Panc1 (cell line): ENCODE measurements at regions of chr19 and their contacts with region 1.

Region 1: DNA sequence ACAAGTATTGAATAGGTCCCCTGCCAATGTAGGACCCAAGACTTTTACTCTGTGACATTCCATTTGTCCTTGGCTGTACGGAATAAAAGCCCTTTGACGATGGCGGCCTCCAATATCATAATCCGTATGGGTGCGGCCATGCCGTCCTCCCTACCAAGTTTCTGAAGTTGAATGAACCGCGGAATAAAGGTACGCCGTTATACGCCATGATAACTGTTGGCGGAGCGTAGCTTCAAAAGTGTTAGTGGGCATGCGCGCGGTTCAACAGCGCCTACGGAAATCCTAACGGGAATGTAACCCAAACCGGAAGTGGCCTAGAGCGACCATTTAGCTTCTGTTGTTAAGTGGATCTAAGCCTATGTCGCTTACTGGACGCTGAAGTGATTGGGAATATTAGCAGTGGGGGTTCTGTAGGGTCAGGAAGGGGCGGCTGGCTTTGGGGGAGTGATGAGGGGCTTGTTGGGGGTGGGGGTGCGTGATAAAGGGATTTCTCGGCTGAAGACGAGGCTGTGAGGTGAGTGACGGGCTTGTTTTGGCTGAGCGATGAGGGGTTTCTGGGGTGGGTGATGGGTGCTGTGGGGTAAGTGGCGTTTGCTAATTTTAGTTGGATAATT is at the start of gene ZNF175:
- DNase-seq: peak; percentile 91
- ATAC-seq: peak; percentile 99
- H3K4me3 ChIP-seq: peak within 1 kb of the TSS; percentile 71 to 86
- H3K27ac ChIP-seq: peak within 1 kb of the TSS; percentile 81
- H3K4me1 ChIP-seq: no peaks in the 10 kb centered on the region
- H3K27me3 ChIP-seq: peaks cover 7% of the 10 kb centered on the region
- CTCF ChIP-seq: no peak
- total RNA-seq, gene ZNF175: 7.3 TPM

Region 2: GRCh38 chr19:51292971-51293370 is 278.1 kb before region 1 on chr19:
- CTCF ChIA-PET with region 1: interaction called, 11 read pairs
- POLR2A ChIA-PET with region 1: no interaction called
- in situ Hi-C with region 1: no loop called
- intact Hi-C with region 1: no loop called
- DNase-seq: no peak
- ATAC-seq: no peak
- H3K4me3 ChIP-seq: no peak overlapping the region
- H3K27ac ChIP-seq: no peak overlapping the region
- H3K4me1 ChIP-seq: no peaks in the 10 kb centered on the region
- H3K27me3 ChIP-seq: no peaks in the 10 kb centered on the region; the same call in 1 of the 2 replicates
- CTCF ChIP-seq: no peak

Region 3: GRCh38 chr19:51493776-51494175 is 77.3 kb before region 1 on chr19:
- CTCF ChIA-PET with region 1: no interaction called
- POLR2A ChIA-PET with region 1: interaction called, 15 read pairs
- in situ Hi-C with region 1: no loop called
- intact Hi-C with region 1: no loop called
- DNase-seq: no peak
- ATAC-seq: no peak
- H3K4me3 ChIP-seq: no peak overlapping the region
- H3K27ac ChIP-seq: no peak overlapping the region
- H3K4me1 ChIP-seq: no peaks in the 10 kb centered on the region
- H3K27me3 ChIP-seq: peaks cover 3% of the 10 kb centered on the region; the same call in 1 of the 2 replicates
- CTCF ChIP-seq: no peak